ENCODE measurements at regions of chr6 and their contacts with region 1.

Region 1: DNA sequence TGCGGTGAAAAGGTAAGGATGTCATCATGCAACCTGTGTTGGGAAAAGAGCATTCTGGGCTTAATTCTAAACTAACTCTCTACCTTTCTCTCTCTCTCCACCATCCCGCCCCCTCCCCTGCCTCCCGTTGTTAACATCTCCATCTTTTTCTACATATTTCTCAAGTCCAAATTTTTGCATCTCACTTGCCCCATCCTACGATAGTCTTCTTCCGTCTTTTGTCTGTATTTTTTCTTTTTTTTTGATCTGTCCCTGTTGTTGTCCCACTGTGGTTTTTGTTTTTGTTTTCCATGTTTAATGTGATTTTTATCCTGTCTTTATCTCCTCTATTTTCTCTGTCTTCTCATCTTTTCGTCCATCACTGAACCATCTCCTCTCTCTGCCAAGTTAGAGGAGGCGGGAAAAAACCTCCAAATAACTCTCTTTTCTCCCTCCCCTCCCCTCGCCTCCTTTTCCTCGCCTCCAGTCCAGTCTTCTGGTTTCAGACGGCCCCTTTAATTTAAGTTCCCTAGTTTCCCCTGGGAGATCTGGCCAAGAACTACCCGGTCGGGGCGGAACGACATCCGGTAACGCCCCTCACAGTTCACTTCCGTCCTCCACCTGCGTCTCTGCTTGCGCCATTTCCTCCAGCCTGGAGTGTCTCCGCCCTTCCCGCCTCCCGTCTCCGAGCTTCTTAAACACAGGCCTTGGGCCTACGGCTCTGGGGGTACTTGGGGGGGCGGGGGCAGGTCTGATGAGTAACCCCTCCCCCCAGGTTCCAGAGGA is at the start of gene NFKBIL1:
- DNase-seq: peak; percentile 94
- H3K4me3 ChIP-seq: peak within 1 kb of the TSS; percentile 31 to 55 (median 34)
- H3K27ac ChIP-seq: peak within 1 kb of the TSS; percentile 87
- H3K4me1 ChIP-seq: peaks cover 20% of the 10 kb centered on the region
- H3K27me3 ChIP-seq: no peaks in the 10 kb centered on the region
- CTCF ChIP-seq: no peak
- POLR2A ChIP-seq: peak; percentile 55
- total RNA-seq, gene NFKBIL1: 14.6 and 15.5 TPM in 2 replicates

Region 2: DNA sequence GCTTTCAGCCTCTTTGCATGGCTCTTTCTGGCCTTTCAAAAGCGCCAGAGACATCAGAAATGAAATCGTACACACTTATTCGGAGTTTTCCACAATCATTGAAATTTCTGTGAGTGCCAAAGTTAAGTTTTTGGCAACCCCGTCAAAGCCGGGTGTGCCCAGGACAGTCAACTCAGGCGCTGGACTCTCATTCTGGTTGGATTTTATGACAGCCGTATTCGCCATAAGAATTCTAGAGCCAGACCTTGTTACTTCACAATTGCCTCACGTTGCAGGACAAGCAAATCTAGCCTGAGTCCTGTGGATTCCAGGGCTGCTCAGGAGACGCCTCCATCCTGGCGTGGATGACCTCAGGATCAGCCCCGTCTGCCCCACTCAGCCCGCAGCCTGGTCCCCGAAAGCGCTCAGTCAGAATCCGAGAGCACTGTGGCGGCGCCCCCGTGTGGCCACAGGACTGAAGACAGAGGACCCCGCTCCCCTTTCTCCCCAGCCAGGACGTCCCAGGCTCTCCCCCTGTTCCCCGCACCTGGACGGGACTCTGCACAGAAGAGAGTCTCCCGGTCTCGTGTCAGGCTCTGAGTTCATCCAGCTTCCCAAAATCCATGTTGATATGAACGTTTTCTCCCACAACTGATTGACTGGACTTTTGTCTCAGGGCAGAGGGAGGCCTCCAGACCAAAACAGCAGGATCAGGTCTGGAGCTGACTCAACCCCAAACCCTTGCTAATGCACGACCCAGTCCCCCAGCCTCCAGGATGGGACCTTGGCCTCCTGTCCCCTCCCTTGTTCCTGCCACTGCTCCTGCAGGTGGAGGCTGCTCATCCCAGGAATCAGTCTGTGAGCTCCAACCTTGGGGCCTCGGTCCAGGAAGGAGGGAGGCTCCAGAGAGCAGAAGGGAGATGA is 105.5 kb before region 1 on chr6:
- CTCF ChIA-PET with region 1: no interaction called
- POLR2A ChIA-PET with region 1: no interaction called
- dilution Hi-C with region 1: no loop called
- intact Hi-C with region 1: no loop called
- DNase-seq: peak; percentile 56
- H3K4me3 ChIP-seq: no peak overlapping the region
- H3K27ac ChIP-seq: no peak overlapping the region
- H3K4me1 ChIP-seq: no peaks in the 10 kb centered on the region
- H3K27me3 ChIP-seq: peaks cover 22 to 40% of the 10 kb centered on the region in 2 experiments
- CTCF ChIP-seq: peak; percentile 85 to 90
- POLR2A ChIP-seq: no peak

Region 3: DNA sequence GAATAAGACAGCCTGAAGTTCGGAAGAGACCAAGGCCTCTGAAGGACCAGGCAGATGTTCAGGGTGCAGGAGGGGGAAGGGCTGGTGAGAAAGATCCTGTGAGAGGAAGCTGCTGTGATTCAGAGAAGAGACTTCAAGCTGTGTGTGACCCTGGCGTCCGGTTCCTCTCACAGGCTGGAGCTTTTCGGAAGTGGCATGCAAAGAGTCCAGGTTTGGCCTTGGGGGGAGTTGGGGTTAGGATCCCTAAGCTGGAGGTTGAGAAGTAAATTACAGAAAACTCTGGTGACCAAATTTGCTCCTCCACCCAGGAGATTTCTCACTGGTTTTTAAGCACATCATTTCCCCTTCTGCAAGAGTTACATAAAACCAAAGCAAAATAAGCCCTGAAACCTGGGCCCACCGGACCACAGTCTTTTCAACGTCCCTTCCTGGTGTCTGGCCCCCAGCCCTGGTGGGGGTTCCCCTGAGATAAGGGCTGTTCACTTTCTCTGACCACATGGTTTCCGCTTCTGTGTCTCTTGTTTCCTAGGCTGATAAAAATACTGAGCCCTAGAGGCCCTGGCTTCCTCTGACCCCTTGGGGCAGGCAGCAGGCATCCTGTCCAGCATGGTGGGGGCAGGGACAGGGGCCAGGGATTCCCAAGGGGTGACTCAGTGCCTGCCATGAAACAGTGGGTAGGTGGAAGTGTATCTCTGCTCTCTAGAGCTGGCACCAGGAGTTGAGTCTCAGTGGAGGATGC is 13.0 kb after region 1 on chr6:
- CTCF ChIA-PET with region 1: interaction called, 31 read pairs
- POLR2A ChIA-PET with region 1: no interaction called
- dilution Hi-C with region 1: no loop called
- intact Hi-C with region 1: loop called (anchors 1 kb)
- DNase-seq: peak; percentile 99
- H3K4me3 ChIP-seq: peak overlapping the region in 1 of 3 experiments; percentile 29
- H3K27ac ChIP-seq: peak overlapping the region; percentile 98
- H3K4me1 ChIP-seq: peaks cover 69% of the 10 kb centered on the region
- H3K27me3 ChIP-seq: no peaks in the 10 kb centered on the region
- CTCF ChIP-seq: no peak
- POLR2A ChIP-seq: peak; percentile 71

Region 4: GRCh38 chr6:31597006-31597405 is 49.9 kb after region 1 on chr6:
- CTCF ChIA-PET with region 1: interaction called, 1,517 read pairs
- POLR2A ChIA-PET with region 1: interaction called, 22 read pairs
- dilution Hi-C with region 1: no loop called
- intact Hi-C with region 1: loop called (anchors 1 kb)
- DNase-seq: peak; percentile 67
- H3K4me3 ChIP-seq: no peak overlapping the region
- H3K27ac ChIP-seq: no peak overlapping the region
- H3K4me1 ChIP-seq: no peaks in the 10 kb centered on the region
- H3K27me3 ChIP-seq: no peaks in the 10 kb centered on the region
- CTCF ChIP-seq: peak; percentile 43 to 47
- POLR2A ChIP-seq: no peak

Region 5: DNA sequence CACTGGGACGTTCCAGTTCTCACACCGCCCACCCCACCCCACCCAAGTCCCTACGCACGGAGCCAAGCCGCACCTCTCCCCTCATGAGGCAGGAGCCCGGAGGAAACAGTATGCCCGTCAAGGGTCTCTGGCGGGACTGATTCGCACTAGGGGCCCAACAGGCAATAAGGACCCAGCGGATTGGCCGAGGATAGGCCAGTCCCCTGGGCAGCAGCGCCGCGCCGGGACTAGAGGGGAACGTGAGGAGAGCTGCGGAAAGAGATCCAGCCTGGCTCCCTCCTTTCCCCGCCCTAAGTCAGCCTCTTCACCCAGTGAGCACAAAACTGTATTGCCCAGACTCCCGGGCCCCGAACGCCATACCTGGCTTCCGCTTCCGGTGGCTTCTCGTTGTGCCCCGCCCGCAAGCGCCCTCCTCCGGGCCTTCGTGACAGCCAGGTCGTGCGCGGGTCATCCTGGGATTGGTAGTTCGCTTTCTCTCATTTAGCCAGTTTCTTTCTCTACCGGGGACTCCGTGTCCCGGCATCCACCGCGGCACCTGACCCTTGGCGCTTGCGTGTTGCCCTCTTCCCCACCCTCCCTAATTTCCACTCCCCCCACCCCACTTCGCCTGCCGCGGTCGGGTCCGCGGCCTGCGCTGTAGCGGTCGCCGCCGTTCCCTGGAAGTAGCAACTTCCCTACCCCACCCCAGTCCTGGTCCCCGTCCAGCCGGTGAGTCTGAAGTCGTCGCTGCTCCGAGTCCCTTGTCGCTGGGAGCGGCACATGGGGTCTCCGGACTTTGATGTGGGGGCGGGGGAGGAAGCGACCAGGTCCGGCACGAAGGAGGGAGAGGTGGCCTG is 118.6 kb after region 1 on chr6 and contains the start of gene CSNK2B:
- CTCF ChIA-PET with region 1: interaction called, 3 read pairs
- POLR2A ChIA-PET with region 1: interaction called, 5 read pairs
- dilution Hi-C with region 1: no loop called
- intact Hi-C with region 1: loop called (anchors 1 kb)
- DNase-seq: peak; percentile 97
- H3K4me3 ChIP-seq: peak within 1 kb of the TSS; percentile 70 to 94 (median 72)
- H3K27ac ChIP-seq: peak within 1 kb of the TSS; percentile 77
- H3K4me1 ChIP-seq: peaks cover 28% of the 10 kb centered on the region
- H3K27me3 ChIP-seq: no peaks in the 10 kb centered on the region
- CTCF ChIP-seq: peak in 1 of 2 donors; percentile 13
- POLR2A ChIP-seq: peak; percentile 54
- total RNA-seq, gene CSNK2B: 206 and 214 TPM in 2 replicates

Region 6: GRCh38 chr6:31834434-31835198 is 287.5 kb after region 1 on chr6:
- CTCF ChIA-PET with region 1: interaction called, 7 read pairs
- POLR2A ChIA-PET with region 1: no interaction called
- dilution Hi-C with region 1: no loop called
- intact Hi-C with region 1: loop called (anchors 2 kb)
- DNase-seq: peak; percentile 83
- H3K4me3 ChIP-seq: peak overlapping the region; percentile 38 to 98 (median 81)
- H3K27ac ChIP-seq: peak overlapping the region; percentile 97
- H3K4me1 ChIP-seq: peaks cover 32% of the 10 kb centered on the region
- H3K27me3 ChIP-seq: no peaks in the 10 kb centered on the region
- CTCF ChIP-seq: no peak
- POLR2A ChIP-seq: peak; percentile 100